ENCODE measurements at regions of chr12 and their contacts with region 1.

Region 1: GRCh38 chr12:94074980-94075928 is 73.1 kb upstream of the PLXNC1 start:
- DNase-seq: no peak
- ATAC-seq: peak; percentile 56; the same call in 2 of the 3 replicates
- H3K4me3 ChIP-seq: no peak overlapping the region
- H3K27ac ChIP-seq: no peak overlapping the region
- H3K4me1 ChIP-seq: no peaks in the 10 kb centered on the region
- H3K27me3 ChIP-seq: no peaks in the 10 kb centered on the region; a peak in 1 of 4 replicates
- CTCF ChIP-seq: peak; percentile 30 to 41 (median 40); a peak in 4 of 6 replicates
- EP300 ChIP-seq: no peak
- POLR2A ChIP-seq: no peak
- RAD21 ChIP-seq: peak; percentile 46

Region 2: GRCh38 chr12:93714382-93714781 is 360.9 kb before region 1 on chr12:
- CTCF ChIA-PET with region 1: no interaction called
- POLR2A ChIA-PET with region 1: interaction called, 15 read pairs
- RAD21 ChIA-PET with region 1: no interaction called
- SMC1A ChIA-PET with region 1: no interaction called
- in situ Hi-C with region 1: no loop called
- intact Hi-C with region 1: no loop called
- DNase-seq: no peak
- ATAC-seq: no peak
- H3K4me3 ChIP-seq: no peak overlapping the region
- H3K27ac ChIP-seq: no peak overlapping the region
- H3K4me1 ChIP-seq: no peaks in the 10 kb centered on the region
- H3K27me3 ChIP-seq: no peaks in the 10 kb centered on the region
- CTCF ChIP-seq: no peak
- EP300 ChIP-seq: no peak
- POLR2A ChIP-seq: no peak
- RAD21 ChIP-seq: no peak